Sciatic nerve (tissue), 2 donors: ENCODE measurements at regions of chr4 and their contacts with region 1.

Region 1: DNA sequence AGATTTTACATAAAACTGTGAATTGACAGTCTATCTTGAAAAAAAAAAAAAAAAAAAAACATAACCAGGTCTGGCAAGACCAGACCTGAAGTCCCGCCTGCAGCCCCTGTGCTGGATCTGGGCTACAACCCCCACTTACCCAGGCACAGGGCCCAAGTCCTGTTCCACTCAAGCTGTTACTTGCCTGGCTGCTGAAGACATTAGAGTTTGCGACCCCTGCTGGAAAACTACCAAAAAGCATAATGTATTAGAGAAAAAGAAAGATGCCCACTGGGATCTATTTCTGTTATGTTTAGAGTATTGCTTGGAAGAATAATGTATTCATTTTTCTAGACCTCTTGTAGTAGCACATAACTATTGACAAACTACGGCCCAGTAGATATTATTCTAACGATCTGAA is 4.7 kb downstream of the HS3ST1 start:
- DNase-seq: no peak
- ATAC-seq: no peak

Region 2: DNA sequence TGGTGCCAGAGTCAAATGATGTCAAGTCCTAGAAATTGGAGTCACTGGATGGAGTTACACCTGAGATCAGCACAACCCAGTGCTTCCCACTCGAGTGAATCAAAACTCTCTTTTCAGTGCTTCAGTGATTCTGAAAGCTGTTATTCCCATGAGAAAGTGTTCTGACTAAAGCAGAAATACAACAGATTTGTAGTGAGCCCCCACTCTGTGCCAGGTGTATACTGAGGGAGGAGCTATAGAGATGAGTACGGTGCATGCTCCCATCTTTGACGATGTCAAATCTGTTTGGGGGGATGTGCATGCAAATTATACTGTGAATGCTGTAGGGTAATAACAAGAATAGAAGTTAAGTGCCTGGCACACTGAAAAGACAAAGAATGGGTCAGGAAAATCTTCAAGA is 325.5 kb before region 1 on chr4:
- intact Hi-C with region 1: no loop called
- DNase-seq: no peak
- ATAC-seq: no peak

Region 3: GRCh38 chr4:11397819-11398610 is 26.0 kb before region 1 on chr4:
- intact Hi-C with region 1: no loop called
- DNase-seq: no peak
- ATAC-seq: peak; percentile 91

Region 4: DNA sequence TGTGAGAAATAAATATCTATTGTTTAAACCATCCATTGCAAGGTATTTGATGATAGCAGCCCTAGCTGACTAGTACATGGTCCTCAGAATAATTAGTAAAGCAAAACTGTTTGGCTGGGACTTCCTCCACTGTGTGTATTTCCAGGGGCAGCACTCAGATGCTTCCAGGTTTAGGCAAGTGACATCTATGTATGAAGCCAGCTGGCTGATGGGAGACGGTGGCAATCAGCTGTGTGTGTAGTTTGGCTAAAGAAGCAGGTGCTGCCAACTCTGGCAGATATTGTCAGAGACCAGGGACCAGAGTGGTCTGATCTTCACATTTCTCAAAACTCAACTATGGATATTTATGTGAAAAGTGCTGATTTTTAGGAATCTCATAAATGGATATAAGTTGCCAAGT is 14.4 kb before region 1 on chr4:
- intact Hi-C with region 1: loop called (anchors 2 kb)
- DNase-seq: no peak
- ATAC-seq: no peak

Region 5: DNA sequence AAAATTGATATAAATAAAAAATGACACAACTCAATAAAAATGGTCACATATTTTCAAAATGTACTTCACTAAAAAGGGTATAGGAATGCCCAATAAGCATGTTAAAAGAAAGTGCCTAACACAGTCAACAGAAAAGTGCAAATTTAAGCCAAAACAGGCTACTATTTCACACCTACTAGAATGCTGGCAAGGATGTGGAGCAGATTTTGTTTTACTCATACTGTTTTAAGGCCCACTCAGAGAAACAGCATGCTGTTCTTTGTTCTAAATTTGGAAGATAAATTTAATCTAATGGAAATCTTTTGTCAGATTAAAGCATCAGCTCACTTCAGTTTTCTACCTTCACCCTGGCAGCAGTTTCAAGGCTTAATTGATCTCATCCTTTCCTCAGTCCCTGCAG is 581.5 kb after region 1 on chr4:
- intact Hi-C with region 1: no loop called
- DNase-seq: no peak
- ATAC-seq: no peak